ENCODE measurements at regions of chr13 and their contacts with region 1.

Region 1: GRCh38 chr13:45306966-45307365 is 34.0 kb downstream of the TPT1 start:
- DNase-seq: no peak
- H3K4me3 ChIP-seq: no peak overlapping the region
- H3K27ac ChIP-seq: no peak overlapping the region
- H3K4me1 ChIP-seq: peaks cover 6 to 23% (median 15%) of the 10 kb centered on the region in 4 donors
- H3K27me3 ChIP-seq: peaks cover 0 to 9% (median 0%) of the 10 kb centered on the region in 3 donors
- CTCF ChIP-seq: no peak
- EP300 ChIP-seq: no peak
- POLR2A ChIP-seq: no peak

Region 2: GRCh38 chr13:45047394-45048310 is 259.3 kb before region 1 on chr13:
- intact Hi-C with region 1: loop called (anchors 5 kb)
- DNase-seq: peak; percentile 80 to 93
- H3K4me3 ChIP-seq: peak overlapping the region; percentile 41 to 48 (median 45)
- H3K27ac ChIP-seq: peak overlapping the region in 1 of 5 donors; percentile 4
- H3K4me1 ChIP-seq: peaks cover 0 to 14% (median 12%) of the 10 kb centered on the region in 4 donors
- H3K27me3 ChIP-seq: no peaks in the 10 kb centered on the region
- CTCF ChIP-seq: peak in 5 of 7 experiments; percentile 59 to 89 (median 80)
- EP300 ChIP-seq: no peak
- POLR2A ChIP-seq: no peak

Region 3: GRCh38 chr13:45817833-45818232 is 510.9 kb after region 1 on chr13:
- intact Hi-C with region 1: no loop called
- DNase-seq: no peak
- H3K4me3 ChIP-seq: no peak overlapping the region
- H3K27ac ChIP-seq: no peak overlapping the region
- H3K4me1 ChIP-seq: no peaks in the 10 kb centered on the region
- H3K27me3 ChIP-seq: no peaks in the 10 kb centered on the region
- CTCF ChIP-seq: no peak
- EP300 ChIP-seq: no peak
- POLR2A ChIP-seq: no peak

Measured in stomach (tissue), 19 donors.